MCF 10A (cell line): ENCODE measurements at regions of chr9 and their contacts with region 1.

Region 1: GRCh38 chr9:70924895-70925547 is 196.4 kb downstream of the TRPM3 start:
- DNase-seq: peak; percentile 88
- H3K4me3 Mint-ChIP-seq: peak overlapping the region; percentile 66
- H3K27ac Mint-ChIP-seq: peak overlapping the region; percentile 19
- H3K4me1 Mint-ChIP-seq: peaks cover 25% of the 10 kb centered on the region
- H3K27me3 Mint-ChIP-seq: no peaks in the 10 kb centered on the region
- CTCF ChIP-seq: peak; percentile 82

Region 2: DNA sequence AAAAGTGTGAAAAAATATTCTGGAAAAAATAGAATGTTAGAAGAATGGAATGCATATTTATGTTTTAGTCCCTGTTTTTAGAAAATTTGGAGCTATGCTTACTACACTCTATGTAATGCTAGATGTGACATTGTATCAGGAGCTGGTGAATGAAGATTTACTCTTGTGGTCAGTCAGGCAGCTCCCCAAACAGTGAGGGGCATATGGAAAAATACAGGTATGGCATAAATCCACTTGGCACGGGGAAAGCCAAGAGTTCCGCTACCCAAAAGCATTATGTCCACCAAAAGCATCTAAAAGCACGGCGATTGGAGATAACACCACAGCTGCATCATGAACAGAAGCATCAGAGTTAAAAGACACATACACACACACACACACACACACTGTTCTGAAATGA is 290.3 kb before region 1 on chr9:
- CTCF ChIA-PET with region 1: interaction called, 27 read pairs
- POLR2A ChIA-PET with region 1: no interaction called
- intact Hi-C with region 1: loop called (anchors 5 kb)
- DNase-seq: no peak
- H3K4me3 Mint-ChIP-seq: no peak overlapping the region
- H3K27ac Mint-ChIP-seq: no peak overlapping the region
- H3K4me1 Mint-ChIP-seq: no peaks in the 10 kb centered on the region
- H3K27me3 Mint-ChIP-seq: peaks cover 11% of the 10 kb centered on the region
- CTCF ChIP-seq: no peak

Region 3: GRCh38 chr9:70639853-70640814 is 284.9 kb before region 1 on chr9:
- CTCF ChIA-PET with region 1: interaction called, 27 read pairs
- POLR2A ChIA-PET with region 1: no interaction called
- intact Hi-C with region 1: loop called (anchors 1 kb)
- DNase-seq: peak; percentile 64
- H3K4me3 Mint-ChIP-seq: no peak overlapping the region
- H3K27ac Mint-ChIP-seq: no peak overlapping the region
- H3K4me1 Mint-ChIP-seq: no peaks in the 10 kb centered on the region
- H3K27me3 Mint-ChIP-seq: peaks cover 18% of the 10 kb centered on the region
- CTCF ChIP-seq: peak; percentile 66

Region 4: GRCh38 chr9:70840266-70840665 is 84.8 kb before region 1 on chr9:
- CTCF ChIA-PET with region 1: no interaction called
- POLR2A ChIA-PET with region 1: no interaction called
- intact Hi-C with region 1: no loop called
- DNase-seq: no peak
- H3K4me3 Mint-ChIP-seq: no peak overlapping the region
- H3K27ac Mint-ChIP-seq: no peak overlapping the region
- H3K4me1 Mint-ChIP-seq: no peaks in the 10 kb centered on the region
- H3K27me3 Mint-ChIP-seq: peaks cover 11% of the 10 kb centered on the region
- CTCF ChIP-seq: no peak

Region 5: GRCh38 chr9:70935856-70936255 is 10.8 kb after region 1 on chr9:
- CTCF ChIA-PET with region 1: interaction called, 10 read pairs
- POLR2A ChIA-PET with region 1: interaction called, 4 read pairs
- intact Hi-C with region 1: no loop called
- DNase-seq: no peak
- H3K4me3 Mint-ChIP-seq: no peak overlapping the region
- H3K27ac Mint-ChIP-seq: no peak overlapping the region
- H3K4me1 Mint-ChIP-seq: no peaks in the 10 kb centered on the region
- H3K27me3 Mint-ChIP-seq: peaks cover 22% of the 10 kb centered on the region
- CTCF ChIP-seq: no peak

Region 6: GRCh38 chr9:71001780-71002386 is 76.9 kb after region 1 on chr9:
- CTCF ChIA-PET with region 1: interaction called, 51 read pairs
- POLR2A ChIA-PET with region 1: interaction called, 4 read pairs
- intact Hi-C with region 1: loop called (anchors 1 kb)
- DNase-seq: peak; percentile 70
- H3K4me3 Mint-ChIP-seq: no peak overlapping the region
- H3K27ac Mint-ChIP-seq: no peak overlapping the region
- H3K4me1 Mint-ChIP-seq: no peaks in the 10 kb centered on the region
- H3K27me3 Mint-ChIP-seq: no peaks in the 10 kb centered on the region
- CTCF ChIP-seq: peak; percentile 47